ENCODE measurements at regions of chr5 and their contacts with region 1.

Region 1: DNA sequence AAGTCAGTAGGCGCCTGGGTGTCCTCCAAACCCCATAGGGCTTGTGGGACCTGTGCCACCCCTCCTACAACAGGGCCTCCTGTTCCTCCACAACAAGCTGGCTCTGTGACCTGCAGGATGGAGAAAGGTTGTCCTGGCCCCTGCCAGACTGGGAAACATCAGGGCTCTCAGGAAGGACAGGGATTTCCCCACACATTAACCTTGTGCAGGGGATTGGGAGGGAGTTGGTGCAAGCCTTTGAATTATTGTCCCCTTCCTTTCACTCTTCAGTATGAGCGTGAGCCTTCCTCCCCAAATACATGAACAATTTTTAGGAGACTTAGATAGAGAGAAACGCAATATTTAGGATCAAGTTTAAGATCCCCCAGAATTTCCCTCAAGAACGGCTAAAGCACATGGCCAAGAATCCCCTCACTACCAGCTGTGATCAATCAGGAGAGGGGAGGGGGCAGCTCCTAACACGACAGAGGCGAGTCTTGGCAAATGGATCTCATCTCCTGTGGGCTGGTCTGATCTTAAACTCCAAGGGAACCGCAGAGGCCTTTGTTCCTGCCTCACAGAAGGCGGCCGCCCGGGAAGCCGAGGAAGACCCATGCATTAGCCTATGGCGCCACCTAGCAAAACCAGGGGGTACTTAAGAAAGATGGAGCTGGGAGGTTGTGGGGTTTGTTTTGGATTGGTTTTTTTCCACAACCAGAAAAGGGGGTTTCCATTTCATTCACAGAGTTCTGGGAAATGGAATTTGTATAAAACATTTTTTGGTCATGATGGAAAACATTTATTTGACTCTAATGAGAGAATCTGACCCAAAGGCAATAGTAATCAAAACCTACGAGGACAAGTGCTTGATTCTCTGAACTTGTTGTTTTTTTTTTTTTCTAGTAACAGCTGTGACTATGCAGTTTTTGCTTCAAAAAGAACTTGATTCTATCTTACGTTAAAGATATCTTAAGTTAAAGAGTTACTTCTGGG is 36.1 kb upstream of the OSMR start:
- DNase-seq: peak in 1 of 2 experiments; percentile 88
- H3K4me3 ChIP-seq: no peak overlapping the region
- H3K27ac ChIP-seq: no peak overlapping the region
- H3K4me1 ChIP-seq: no peaks in the 10 kb centered on the region; the same call in 1 of the 2 replicates
- H3K27me3 ChIP-seq: no peaks in the 10 kb centered on the region
- CTCF ChIP-seq: peak; percentile 95

Region 2: GRCh38 chr5:38208782-38209378 is 600.8 kb before region 1 on chr5:
- CTCF ChIA-PET with region 1: interaction called, 3 read pairs
- POLR2A ChIA-PET with region 1: no interaction called
- intact Hi-C with region 1: loop called (anchors 1 kb)
- DNase-seq: peak; percentile 32 to 34
- H3K4me3 ChIP-seq: no peak overlapping the region
- H3K27ac ChIP-seq: no peak overlapping the region
- H3K4me1 ChIP-seq: no peaks in the 10 kb centered on the region
- H3K27me3 ChIP-seq: 0 out of 2 replicates have a peak, but pooled peaks cover 7% of the 10 kb centered on the region
- CTCF ChIP-seq: peak; percentile 63

Region 3: DNA sequence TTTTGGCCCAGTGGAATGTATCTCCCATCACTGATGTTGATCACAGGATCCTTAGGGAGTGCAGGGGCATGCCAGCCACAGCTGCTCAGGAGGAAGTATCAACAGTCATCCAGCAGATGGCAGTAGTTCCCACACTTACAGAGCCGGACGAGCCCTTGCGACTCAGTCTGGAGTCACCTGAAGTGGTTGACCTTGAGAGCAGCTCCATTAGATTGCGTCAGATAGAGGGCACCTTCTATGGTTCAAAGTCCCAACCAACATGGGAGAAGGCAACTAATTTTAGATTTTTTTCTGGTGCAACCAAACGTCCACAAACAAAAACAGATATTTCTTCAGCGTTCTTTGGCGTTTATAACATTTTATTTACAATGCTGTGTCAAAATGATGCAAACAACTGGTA is 426.8 kb before region 1 on chr5:
- CTCF ChIA-PET with region 1: interaction called, 14 read pairs
- POLR2A ChIA-PET with region 1: no interaction called
- intact Hi-C with region 1: loop called (anchors 1 kb)
- DNase-seq: peak; percentile 58 to 77
- H3K4me3 ChIP-seq: no peak overlapping the region
- H3K27ac ChIP-seq: no peak overlapping the region
- H3K4me1 ChIP-seq: no peaks in the 10 kb centered on the region
- H3K27me3 ChIP-seq: peaks cover 37% of the 10 kb centered on the region
- CTCF ChIP-seq: peak; percentile 88

Region 4: GRCh38 chr5:38509185-38509584 is 300.5 kb before region 1 on chr5:
- CTCF ChIA-PET with region 1: no interaction called
- POLR2A ChIA-PET with region 1: interaction called, 20 read pairs
- intact Hi-C with region 1: no loop called
- DNase-seq: no peak
- H3K4me3 ChIP-seq: no peak overlapping the region
- H3K27ac ChIP-seq: no peak overlapping the region
- H3K4me1 ChIP-seq: no peaks in the 10 kb centered on the region
- H3K27me3 ChIP-seq: no peaks in the 10 kb centered on the region
- CTCF ChIP-seq: no peak

Region 5: GRCh38 chr5:38598994-38599611 is 210.6 kb before region 1 on chr5:
- CTCF ChIA-PET with region 1: interaction called, 7 read pairs
- POLR2A ChIA-PET with region 1: no interaction called
- intact Hi-C with region 1: loop called (anchors 5 kb)
- DNase-seq: peak; percentile 60 to 80
- H3K4me3 ChIP-seq: no peak overlapping the region
- H3K27ac ChIP-seq: peak overlapping the region; percentile 38
- H3K4me1 ChIP-seq: peaks cover 76% of the 10 kb centered on the region
- H3K27me3 ChIP-seq: no peaks in the 10 kb centered on the region
- CTCF ChIP-seq: no peak

Region 6: DNA sequence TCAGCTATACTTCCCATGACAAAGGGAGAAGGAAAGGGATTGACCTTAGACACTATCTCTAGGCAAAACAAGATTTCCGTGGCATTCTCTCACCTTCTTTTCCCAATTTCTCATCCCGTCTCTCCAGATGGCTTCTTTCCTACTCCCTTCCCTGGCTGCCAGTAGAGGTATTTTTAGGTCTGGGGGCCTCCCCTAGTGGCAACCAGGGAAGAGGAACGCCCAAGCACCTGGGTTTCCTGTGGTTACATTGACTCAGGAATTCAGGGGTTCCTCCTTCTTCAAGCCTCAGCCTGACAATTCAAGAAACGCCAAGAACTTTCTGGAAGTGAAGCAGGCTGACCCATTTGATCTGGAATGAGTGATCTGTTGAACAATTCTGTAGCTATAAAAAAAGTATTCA is 75.3 kb before region 1 on chr5:
- CTCF ChIA-PET with region 1: interaction called, 4 read pairs
- POLR2A ChIA-PET with region 1: no interaction called
- intact Hi-C with region 1: loop called (anchors 5 kb)
- DNase-seq: no peak
- H3K4me3 ChIP-seq: no peak overlapping the region
- H3K27ac ChIP-seq: no peak overlapping the region
- H3K4me1 ChIP-seq: no peaks in the 10 kb centered on the region
- H3K27me3 ChIP-seq: no peaks in the 10 kb centered on the region
- CTCF ChIP-seq: no peak

Region 7: GRCh38 chr5:38853753-38854463 is 44.2 kb after region 1 on chr5:
- CTCF ChIA-PET with region 1: no interaction called
- POLR2A ChIA-PET with region 1: no interaction called
- intact Hi-C with region 1: no loop called
- DNase-seq: peak; percentile 84 to 100
- H3K4me3 ChIP-seq: peak overlapping the region; percentile 17; the same call in 1 of the 2 replicates
- H3K27ac ChIP-seq: peak overlapping the region; percentile 95
- H3K4me1 ChIP-seq: peaks cover 40% of the 10 kb centered on the region
- H3K27me3 ChIP-seq: no peaks in the 10 kb centered on the region
- CTCF ChIP-seq: no peak

Region 8: DNA sequence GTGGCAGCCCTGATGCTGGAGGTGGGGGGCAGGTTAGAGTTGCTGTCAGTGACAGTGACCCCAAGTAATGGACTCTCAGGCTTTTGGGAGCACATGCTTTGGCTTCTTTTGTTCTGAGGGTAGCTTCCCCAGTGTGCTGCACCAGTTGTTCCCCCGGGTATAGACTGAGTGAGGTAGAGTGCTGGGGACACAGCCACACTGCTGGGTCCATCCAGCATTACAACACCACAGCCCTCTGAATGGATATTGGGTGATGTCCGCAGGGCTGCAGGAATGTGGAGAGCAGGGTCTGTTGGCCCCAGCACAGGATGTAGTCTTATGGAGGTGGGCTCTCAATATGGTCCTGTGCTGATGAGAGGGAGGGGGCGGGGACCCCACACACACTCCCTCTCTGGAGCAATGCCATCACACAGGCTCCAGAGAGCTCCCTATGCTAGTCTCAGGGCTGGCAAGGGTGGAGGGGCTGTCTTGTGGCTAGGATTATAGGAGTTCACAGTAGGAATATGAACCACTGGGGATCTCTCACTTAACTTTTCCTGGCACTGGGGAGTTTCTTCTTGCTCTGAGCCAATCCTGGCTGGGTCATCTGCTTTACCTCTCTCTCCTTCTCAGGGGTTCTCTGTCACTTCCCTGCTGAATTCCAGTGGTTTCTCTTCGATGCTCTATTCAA is 56.8 kb after region 1 on chr5:
- CTCF ChIA-PET with region 1: no interaction called
- POLR2A ChIA-PET with region 1: no interaction called
- intact Hi-C with region 1: no loop called
- DNase-seq: no peak
- H3K4me3 ChIP-seq: no peak overlapping the region
- H3K27ac ChIP-seq: no peak overlapping the region
- H3K4me1 ChIP-seq: peaks cover 27% of the 10 kb centered on the region
- H3K27me3 ChIP-seq: no peaks in the 10 kb centered on the region
- CTCF ChIP-seq: no peak